Activated T-helper 2 cell treated with anti-CD3 and anti-CD28 coated beads, Interferon-gamma antibody, Interleukin-2, Interleukin-4, amounts not matched to agents 10 μg/mL and 5 μg/mL and 100 μg/mL, durations not matched to agents 14 hours and 24 hours and 36 hours (primary cell): ENCODE measurements at regions of chr7 and their contacts with region 1.

Region 1: GRCh38 chr7:85033263-85033662 is 153.6 kb downstream of the SEMA3D start:
- DNase-seq: no peak
- H3K4me3 Mint-ChIP-seq: no peak overlapping the region
- H3K27ac Mint-ChIP-seq: no peak overlapping the region
- H3K4me1 Mint-ChIP-seq: no peaks in the 10 kb centered on the region
- H3K27me3 Mint-ChIP-seq: no peaks in the 10 kb centered on the region

Region 2: GRCh38 chr7:85021101-85021704 is 12.1 kb before region 1 on chr7:
- intact Hi-C with region 1: no loop called
- DNase-seq: no peak
- H3K4me3 Mint-ChIP-seq: no peak overlapping the region
- H3K27ac Mint-ChIP-seq: no peak overlapping the region
- H3K4me1 Mint-ChIP-seq: no peaks in the 10 kb centered on the region
- H3K27me3 Mint-ChIP-seq: no peaks in the 10 kb centered on the region

Region 3: GRCh38 chr7:85750454-85750949 is 717.2 kb after region 1 on chr7:
- intact Hi-C with region 1: loop called (anchors 2 kb)
- DNase-seq: peak; percentile 8
- H3K4me3 Mint-ChIP-seq: no peak overlapping the region
- H3K27ac Mint-ChIP-seq: no peak overlapping the region
- H3K4me1 Mint-ChIP-seq: no peaks in the 10 kb centered on the region
- H3K27me3 Mint-ChIP-seq: no peaks in the 10 kb centered on the region